Activated B cell treated with CpG ODN at 0.5 μM for 24 hours (primary cell): ENCODE measurements at regions of chr2 and their contacts with region 1.

Region 1: GRCh38 chr2:54597153-54597848 is 126.2 kb upstream of the EML6 start:
- DNase-seq: no peak
- ATAC-seq: no peak
- H3K4me3 Mint-ChIP-seq: peak overlapping the region; percentile 60
- H3K27ac Mint-ChIP-seq: peak overlapping the region; percentile 92
- H3K4me1 Mint-ChIP-seq: peaks cover 91% of the 10 kb centered on the region
- H3K27me3 Mint-ChIP-seq: no peaks in the 10 kb centered on the region
- CTCF ChIP-seq: no peak

Region 2: GRCh38 chr2:54570925-54571694 is 26.2 kb before region 1 on chr2:
- CTCF ChIA-PET with region 1: no interaction called
- POLR2A ChIA-PET with region 1: interaction called, 9 read pairs
- intact Hi-C with region 1: loop called (anchors 1 kb)
- DNase-seq: no peak
- ATAC-seq: peak; percentile 49
- H3K4me3 Mint-ChIP-seq: peak overlapping the region; percentile 52
- H3K27ac Mint-ChIP-seq: peak overlapping the region; percentile 94
- H3K4me1 Mint-ChIP-seq: peaks cover 96% of the 10 kb centered on the region
- H3K27me3 Mint-ChIP-seq: no peaks in the 10 kb centered on the region
- CTCF ChIP-seq: no peak

Region 3: DNA sequence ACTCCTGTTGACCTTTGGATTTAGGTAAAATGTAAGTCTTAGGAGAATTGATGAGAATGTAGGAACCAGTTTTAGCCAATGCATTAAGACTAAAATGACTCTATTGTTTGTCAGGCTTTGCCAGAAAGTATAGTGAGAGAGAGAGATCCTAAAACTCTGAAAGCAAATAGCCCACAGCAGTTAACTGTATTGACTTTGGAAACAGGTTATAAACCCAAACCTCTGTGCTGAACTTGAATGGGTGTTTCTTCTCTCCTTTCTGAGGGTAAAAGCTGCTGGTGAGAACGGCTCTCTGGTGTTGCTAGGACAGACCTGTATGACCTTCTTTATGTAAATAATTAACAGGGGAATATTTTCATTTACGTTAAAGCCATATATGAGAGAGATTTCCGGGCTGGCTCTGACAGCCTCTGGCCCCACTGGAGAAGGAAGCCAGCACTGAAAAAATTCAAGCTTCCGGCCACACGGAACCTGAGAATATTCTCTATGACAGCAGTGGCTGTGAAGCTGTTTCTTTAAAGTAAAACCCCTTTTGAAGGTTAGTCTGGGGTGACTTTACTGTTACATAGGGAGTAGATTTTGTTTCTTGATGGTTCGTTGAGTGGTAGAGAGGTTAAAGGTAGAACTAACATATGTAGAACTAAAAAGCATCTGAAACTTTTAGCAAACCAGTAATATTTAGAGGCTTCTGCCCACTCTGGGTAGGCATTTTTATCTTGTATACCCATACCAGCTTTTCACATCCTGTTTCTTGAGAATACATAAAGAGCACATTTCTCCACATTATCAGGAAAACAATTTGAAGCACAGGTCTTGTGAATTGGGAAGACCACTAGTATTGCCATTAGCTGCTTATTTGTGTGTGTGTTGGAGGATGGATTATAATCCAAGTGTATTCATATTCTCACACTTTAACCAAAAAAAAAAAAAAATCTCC is 17.3 kb before region 1 on chr2:
- CTCF ChIA-PET with region 1: interaction called, 5 read pairs
- POLR2A ChIA-PET with region 1: interaction called, 58 read pairs
- intact Hi-C with region 1: loop called (anchors 1 kb)
- DNase-seq: no peak
- ATAC-seq: peak; percentile 66
- H3K4me3 Mint-ChIP-seq: peak overlapping the region; percentile 77
- H3K27ac Mint-ChIP-seq: peak overlapping the region; percentile 95
- H3K4me1 Mint-ChIP-seq: peaks cover 98% of the 10 kb centered on the region
- H3K27me3 Mint-ChIP-seq: no peaks in the 10 kb centered on the region
- CTCF ChIP-seq: no peak

Region 4: GRCh38 chr2:54710216-54710615 is 112.9 kb after region 1 on chr2:
- CTCF ChIA-PET with region 1: no interaction called
- POLR2A ChIA-PET with region 1: no interaction called
- intact Hi-C with region 1: no loop called
- DNase-seq: no peak
- ATAC-seq: no peak
- H3K4me3 Mint-ChIP-seq: peak overlapping the region; percentile 47
- H3K27ac Mint-ChIP-seq: no peak overlapping the region
- H3K4me1 Mint-ChIP-seq: peaks cover 6% of the 10 kb centered on the region
- H3K27me3 Mint-ChIP-seq: peaks cover 8% of the 10 kb centered on the region
- CTCF ChIP-seq: no peak

Region 5: DNA sequence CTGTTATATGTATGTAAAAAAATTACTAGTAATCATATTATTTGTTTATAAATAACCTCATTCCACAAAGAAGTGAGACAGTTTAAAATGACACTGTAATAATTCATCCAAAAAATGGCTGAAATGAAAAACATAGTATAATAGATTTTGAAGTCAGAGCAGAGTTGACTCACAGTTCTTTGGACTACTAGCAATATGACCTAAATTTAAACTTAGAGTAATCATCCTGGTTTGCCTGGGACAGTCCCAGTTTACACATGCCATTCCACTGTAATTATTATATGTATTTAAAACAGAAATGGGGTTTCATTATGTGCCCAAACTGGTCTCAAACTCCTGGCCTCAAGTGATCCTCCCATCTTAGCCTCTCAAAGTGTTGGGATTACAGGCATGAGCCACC is 774.1 kb after region 1 on chr2:
- CTCF ChIA-PET with region 1: no interaction called
- POLR2A ChIA-PET with region 1: no interaction called
- intact Hi-C with region 1: no loop called
- DNase-seq: no peak
- ATAC-seq: no peak
- H3K4me3 Mint-ChIP-seq: no peak overlapping the region
- H3K27ac Mint-ChIP-seq: no peak overlapping the region
- H3K4me1 Mint-ChIP-seq: no peaks in the 10 kb centered on the region
- H3K27me3 Mint-ChIP-seq: no peaks in the 10 kb centered on the region
- CTCF ChIP-seq: no peak